ENCODE measurements at regions of chr15 and their contacts with region 1.

Region 1: DNA sequence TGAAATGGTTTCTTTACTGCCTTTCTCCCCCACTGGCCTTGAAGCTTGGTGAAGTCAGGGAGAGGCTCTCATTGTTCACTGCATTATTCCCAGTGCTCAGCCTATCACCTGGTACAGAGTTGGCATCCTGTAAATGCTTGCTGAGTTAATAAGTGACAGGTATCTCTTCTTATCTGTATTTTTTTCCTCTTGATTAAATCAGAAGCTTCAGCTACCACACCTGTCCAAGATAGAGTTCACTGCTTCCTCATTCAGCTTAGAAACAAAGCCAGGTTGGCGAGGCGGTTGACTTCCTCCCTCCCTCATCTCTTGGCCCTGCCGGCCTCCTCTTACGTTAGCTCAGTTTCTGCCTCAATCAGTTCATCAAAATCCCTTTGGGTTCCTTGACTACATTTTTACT is 142.8 kb downstream of the LIPC start:
- DNase-seq: no peak
- ATAC-seq: no peak
- H3K4me3 ChIP-seq: no peak overlapping the region
- H3K4me3 Mint-ChIP-seq: peak overlapping the region in 1 of 3 donors; percentile 44
- H3K27ac ChIP-seq: no peak overlapping the region
- H3K27ac Mint-ChIP-seq: peak overlapping the region; percentile 21 to 41
- H3K4me1 ChIP-seq: peaks cover 0 to 4% of the 10 kb centered on the region in 2 experiments
- H3K4me1 Mint-ChIP-seq: peaks cover 7 to 12% (median 8%) of the 10 kb centered on the region in 3 donors
- H3K27me3 ChIP-seq: no peaks in the 10 kb centered on the region
- H3K27me3 Mint-ChIP-seq: no peaks in the 10 kb centered on the region

Region 2: GRCh38 chr15:59668556-59668955 is 1093.9 kb after region 1 on chr15:
- CTCF ChIA-PET with region 1: no interaction called
- POLR2A ChIA-PET with region 1: interaction called in 1 of 2 experiments, 10 read pairs
- DNase-seq: no peak
- ATAC-seq: no peak
- H3K4me3 ChIP-seq: no peak overlapping the region
- H3K4me3 Mint-ChIP-seq: no peak overlapping the region
- H3K27ac ChIP-seq: no peak overlapping the region
- H3K27ac Mint-ChIP-seq: no peak overlapping the region
- H3K4me1 ChIP-seq: no peaks in the 10 kb centered on the region
- H3K4me1 Mint-ChIP-seq: peaks cover 0 to 3% (median 2%) of the 10 kb centered on the region in 3 donors
- H3K27me3 ChIP-seq: no peaks in the 10 kb centered on the region
- H3K27me3 Mint-ChIP-seq: no peaks in the 10 kb centered on the region

Measured in T-cell (primary cell).